Heart right ventricle (tissue), 16 donors: ENCODE measurements at regions of chr3 and their contacts with region 1.

Region 1: GRCh38 chr3:182597621-182598041 is 195.7 kb upstream of the ATP11B start:
- DNase-seq: no peak
- ATAC-seq: no peak
- H3K4me3 ChIP-seq: no peak overlapping the region
- H3K27ac ChIP-seq: no peak overlapping the region
- H3K4me1 ChIP-seq: no peaks in the 10 kb centered on the region
- H3K27me3 ChIP-seq: peaks cover 0 to 3% (median 0%) of the 10 kb centered on the region in 7 donors
- CTCF ChIP-seq: no peak

Region 2: GRCh38 chr3:180888992-180889560 is 1708.6 kb before region 1 on chr3:
- intact Hi-C with region 1: loop called in 1 of 10 experiments (anchors 5 kb)
- DNase-seq: no peak
- ATAC-seq: no peak
- H3K4me3 ChIP-seq: no peak overlapping the region
- H3K27ac ChIP-seq: no peak overlapping the region
- H3K4me1 ChIP-seq: no peaks in the 10 kb centered on the region
- H3K27me3 ChIP-seq: no peaks in the 10 kb centered on the region
- CTCF ChIP-seq: no peak

Region 3: GRCh38 chr3:182455011-182455410 is 142.6 kb before region 1 on chr3:
- intact Hi-C with region 1: no loop called
- DNase-seq: no peak
- ATAC-seq: no peak
- H3K4me3 ChIP-seq: no peak overlapping the region
- H3K27ac ChIP-seq: no peak overlapping the region
- H3K4me1 ChIP-seq: no peaks in the 10 kb centered on the region
- H3K27me3 ChIP-seq: no peaks in the 10 kb centered on the region
- CTCF ChIP-seq: no peak

Region 4: GRCh38 chr3:182527745-182528144 is 69.9 kb before region 1 on chr3:
- intact Hi-C with region 1: loop called in 1 of 10 experiments (anchors 2 kb)
- DNase-seq: no peak
- ATAC-seq: no peak
- H3K4me3 ChIP-seq: no peak overlapping the region
- H3K27ac ChIP-seq: no peak overlapping the region
- H3K4me1 ChIP-seq: no peaks in the 10 kb centered on the region
- H3K27me3 ChIP-seq: no peaks in the 10 kb centered on the region
- CTCF ChIP-seq: no peak

Region 5: DNA sequence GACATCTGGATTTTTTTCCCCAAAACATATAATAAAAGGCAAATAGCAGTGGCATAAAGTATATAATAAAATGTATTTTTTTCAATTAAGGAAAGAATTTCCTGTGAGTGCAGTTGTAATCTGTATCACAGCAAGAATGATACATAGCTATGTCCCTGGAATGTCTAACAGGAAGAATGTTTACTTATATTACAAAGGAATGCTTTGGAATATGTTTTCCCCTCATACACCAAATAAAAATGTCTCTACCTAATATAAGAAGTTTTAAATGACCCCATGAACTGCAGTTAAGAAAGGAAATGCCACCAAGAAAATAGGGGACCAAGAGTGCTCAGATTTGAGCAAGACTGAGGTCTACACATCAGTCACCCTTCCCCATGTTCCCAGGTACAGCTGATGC is 157.7 kb after region 1 on chr3:
- intact Hi-C with region 1: no loop called
- DNase-seq: no peak
- ATAC-seq: no peak
- H3K4me3 ChIP-seq: no peak overlapping the region
- H3K27ac ChIP-seq: no peak overlapping the region
- H3K4me1 ChIP-seq: no peaks in the 10 kb centered on the region
- H3K27me3 ChIP-seq: peaks cover 0 to 8% (median 0%) of the 10 kb centered on the region in 7 donors
- CTCF ChIP-seq: no peak

Region 6: DNA sequence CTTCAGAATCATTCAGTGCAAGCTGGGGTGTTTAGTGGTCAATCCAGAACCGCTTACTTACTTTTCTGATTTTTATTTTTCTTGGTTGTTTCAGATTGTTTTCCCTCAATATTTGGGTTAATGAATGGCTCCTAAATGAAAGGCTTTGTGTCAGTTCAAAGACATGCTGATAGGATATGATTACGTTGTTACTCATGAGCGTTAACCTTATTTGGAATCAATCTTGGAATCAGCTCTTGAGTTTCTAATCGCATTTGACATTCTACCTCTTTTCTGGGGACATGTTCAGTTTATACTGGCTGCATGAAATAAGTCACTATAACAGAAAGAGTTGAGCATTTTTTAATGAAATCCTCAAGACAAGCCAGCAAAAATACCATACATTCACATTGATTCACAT is 245.8 kb after region 1 on chr3:
- intact Hi-C with region 1: no loop called
- DNase-seq: no peak
- ATAC-seq: no peak
- H3K4me3 ChIP-seq: no peak overlapping the region
- H3K27ac ChIP-seq: no peak overlapping the region
- H3K4me1 ChIP-seq: no peaks in the 10 kb centered on the region
- H3K27me3 ChIP-seq: no peaks in the 10 kb centered on the region
- CTCF ChIP-seq: no peak